Activated CD4-positive, alpha-beta memory T cell treated with anti-CD3 and anti-CD28 coated beads, Interleukin-2, amount 10 ng/mL, durations not matched to agents 7 days and 5 days (primary cell): ENCODE measurements at regions of chr9 and their contacts with region 1.

Region 1: GRCh38 chr9:19085295-19085694 is 17.4 kb downstream of the HAUS6 start:
- DNase-seq: no peak
- H3K4me3 Mint-ChIP-seq: no peak overlapping the region
- H3K27ac Mint-ChIP-seq: no peak overlapping the region
- H3K4me1 Mint-ChIP-seq: peaks cover 2% of the 10 kb centered on the region
- H3K27me3 Mint-ChIP-seq: no peaks in the 10 kb centered on the region

Region 2: DNA sequence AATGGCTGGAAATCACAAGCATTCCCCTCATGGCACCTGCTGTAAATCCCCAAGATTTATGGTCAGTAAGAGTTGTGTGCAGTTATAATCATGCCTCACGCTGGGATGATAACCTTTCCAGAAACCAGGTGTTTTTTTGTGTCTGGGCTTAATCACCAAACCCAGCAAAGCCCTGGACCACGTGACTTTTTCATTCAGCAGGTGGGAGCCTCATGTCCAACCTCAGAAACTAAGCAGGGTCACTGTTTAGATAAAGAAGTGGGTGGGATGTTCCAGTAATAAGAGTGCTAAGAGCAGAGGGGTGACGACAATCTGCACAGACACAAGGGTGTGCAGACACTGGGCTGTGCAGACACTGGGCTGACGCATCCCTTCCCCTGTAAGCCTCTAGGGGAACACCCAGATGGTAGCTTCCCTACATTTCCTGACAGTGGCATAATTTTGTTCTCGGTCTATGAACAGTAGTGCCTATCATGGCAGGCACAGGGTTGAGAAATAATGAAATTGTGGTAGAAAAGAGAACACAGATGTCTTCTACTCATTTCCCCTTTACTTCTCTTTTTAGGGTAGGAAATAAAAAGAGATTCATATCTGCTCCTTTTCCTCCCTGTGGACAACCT is 137.4 kb before region 1 on chr9:
- CTCF ChIA-PET with region 1: no interaction called
- POLR2A ChIA-PET with region 1: no interaction called
- DNase-seq: no peak
- H3K4me3 Mint-ChIP-seq: no peak overlapping the region
- H3K27ac Mint-ChIP-seq: no peak overlapping the region
- H3K4me1 Mint-ChIP-seq: no peaks in the 10 kb centered on the region
- H3K27me3 Mint-ChIP-seq: peaks cover 8% of the 10 kb centered on the region

Region 3: GRCh38 chr9:19036611-19037010 is 48.7 kb before region 1 on chr9:
- CTCF ChIA-PET with region 1: no interaction called
- POLR2A ChIA-PET with region 1: no interaction called
- DNase-seq: no peak
- H3K4me3 Mint-ChIP-seq: no peak overlapping the region
- H3K27ac Mint-ChIP-seq: no peak overlapping the region
- H3K4me1 Mint-ChIP-seq: no peaks in the 10 kb centered on the region
- H3K27me3 Mint-ChIP-seq: peaks cover 5% of the 10 kb centered on the region

Region 4: GRCh38 chr9:19456996-19457692 is 371.8 kb after region 1 on chr9:
- CTCF ChIA-PET with region 1: interaction called, 24 read pairs
- POLR2A ChIA-PET with region 1: interaction called, 3 read pairs
- DNase-seq: peak; percentile 68
- H3K4me3 Mint-ChIP-seq: peak overlapping the region; percentile 6
- H3K27ac Mint-ChIP-seq: no peak overlapping the region
- H3K4me1 Mint-ChIP-seq: peaks cover 14% of the 10 kb centered on the region
- H3K27me3 Mint-ChIP-seq: no peaks in the 10 kb centered on the region